GM10248 (cell line): ENCODE measurements at regions of chr9 and their contacts with region 1.

Region 1: DNA sequence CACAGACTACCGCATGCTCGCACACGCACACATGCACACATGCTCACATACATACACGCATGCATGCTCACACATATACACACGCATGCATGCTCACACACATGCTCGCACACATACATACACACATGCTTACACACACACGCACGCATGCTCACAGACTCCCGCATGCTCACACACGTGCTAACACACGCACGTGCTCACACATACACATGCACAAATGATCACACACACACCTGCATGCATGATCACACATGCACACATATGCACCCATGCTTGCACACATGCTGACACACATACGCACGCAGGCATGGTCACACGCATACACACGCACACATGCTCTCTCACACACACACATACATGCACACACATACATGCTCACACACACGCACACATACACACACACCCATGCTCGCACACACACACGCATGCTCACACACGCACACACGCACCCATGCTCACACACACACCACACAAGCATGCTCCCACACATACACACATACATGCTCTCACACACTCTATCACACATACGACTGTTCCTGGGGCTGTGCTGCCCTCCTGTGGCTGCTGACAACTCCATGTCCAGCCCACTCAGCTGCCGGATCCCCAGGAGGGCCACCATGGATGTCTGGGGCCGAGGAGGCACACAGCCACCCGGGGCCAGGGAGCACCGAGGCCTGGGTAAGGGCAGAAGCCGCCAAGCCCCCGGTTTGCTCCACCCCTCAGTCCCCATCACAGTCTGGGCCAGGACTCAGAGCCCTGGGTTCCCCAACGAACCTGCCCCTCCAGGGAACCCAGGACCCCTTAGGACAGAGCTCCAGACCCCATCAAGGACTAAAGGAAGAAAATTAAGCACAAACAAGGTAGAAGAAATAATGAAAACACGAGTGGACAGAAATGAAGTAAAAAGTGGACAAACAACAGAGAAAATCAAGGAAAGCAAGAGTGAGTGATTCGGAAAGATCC is 31.4 kb upstream of the EGFL7 start:
- DNase-seq: peak; percentile 79
- CTCF ChIP-seq: peak; percentile 85

Region 2: GRCh38 chr9:136578915-136579649 is 52.2 kb before region 1 on chr9:
- CTCF ChIA-PET with region 1: no interaction called
- POLR2A ChIA-PET with region 1: no interaction called
- DNase-seq: no peak
- CTCF ChIP-seq: no peak

Region 3: DNA sequence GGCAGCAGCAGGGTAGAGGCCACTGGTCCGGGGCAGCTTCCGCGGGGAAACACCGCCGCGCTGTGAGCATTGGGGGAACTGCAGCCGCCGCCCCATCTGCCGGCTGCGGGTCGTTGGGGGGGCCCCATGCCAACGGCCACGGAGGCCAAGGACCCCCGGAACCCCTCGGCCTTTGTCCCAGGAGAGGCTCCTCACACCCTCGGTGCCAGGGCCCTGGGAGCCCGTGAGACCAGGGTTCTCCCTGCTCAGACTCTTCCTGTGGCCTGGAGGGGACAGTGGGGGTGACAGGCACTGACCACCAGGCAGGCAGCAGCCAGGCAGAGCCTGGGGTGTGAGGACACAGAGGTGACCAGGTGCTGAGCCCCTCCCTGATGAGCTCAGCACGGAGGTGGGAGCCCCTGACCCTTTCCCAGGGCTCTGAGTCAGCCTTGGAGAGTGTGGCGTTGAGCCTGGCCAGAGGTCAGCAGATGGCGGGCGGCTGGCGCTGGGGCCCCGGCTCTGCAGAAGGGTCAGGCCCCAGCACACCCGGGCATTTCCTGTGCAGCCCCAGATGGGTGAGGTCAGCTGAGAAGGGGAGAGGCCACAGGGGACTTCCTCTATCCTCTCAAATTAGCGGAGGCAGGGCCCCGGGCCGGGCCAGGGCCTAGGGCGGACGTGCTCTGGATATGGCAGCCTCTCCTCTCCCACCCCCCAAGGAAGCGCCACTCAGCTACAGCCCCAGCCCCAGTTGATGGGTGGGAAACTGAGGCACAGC is 13.5 kb after region 1 on chr9:
- CTCF ChIA-PET with region 1: interaction called, 13 read pairs
- POLR2A ChIA-PET with region 1: interaction called, 3 read pairs
- DNase-seq: peak; percentile 87
- CTCF ChIP-seq: peak; percentile 80